Activated naive CD4-positive, alpha-beta T cell treated with anti-CD3 and anti-CD28 coated beads, Interleukin-2, amount 10 ng/mL, durations not matched to agents 7 days and 5 days (primary cell): ENCODE measurements at regions of chr12 and their contacts with region 1.

Region 1: DNA sequence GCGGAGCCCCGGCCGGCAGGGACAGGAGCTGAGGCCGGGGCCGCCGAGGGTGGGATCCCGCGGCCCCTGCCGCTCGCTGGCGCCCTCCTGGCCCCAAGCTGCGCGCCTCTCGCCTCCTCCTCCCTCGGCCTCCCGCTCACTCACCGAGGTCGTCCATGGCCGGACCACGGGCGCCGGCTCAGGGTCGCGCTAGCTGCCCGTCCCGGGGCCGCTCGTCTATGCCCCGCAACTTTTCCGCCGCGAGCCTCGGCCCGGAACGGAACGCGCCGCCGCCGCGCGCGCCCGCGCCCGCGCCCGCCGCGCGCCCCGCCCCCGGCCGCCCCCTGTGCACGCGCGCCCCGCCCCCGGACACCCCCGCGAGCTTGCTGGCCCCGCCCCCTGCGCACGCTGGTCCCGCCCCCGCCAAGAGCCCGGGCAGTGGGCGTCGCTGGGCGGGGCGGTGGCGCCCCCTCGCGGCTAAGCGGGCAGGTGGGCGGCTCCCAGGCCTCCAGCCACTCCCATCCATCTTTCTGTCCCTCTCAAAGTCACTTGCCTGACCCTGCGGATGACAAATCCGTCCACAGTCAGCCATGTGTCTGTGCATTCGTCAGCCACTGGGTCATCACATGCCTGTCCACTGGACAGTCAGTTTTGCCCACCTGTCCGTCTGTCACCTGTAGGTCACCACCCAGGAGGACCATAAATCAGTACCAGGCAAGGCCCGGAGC is at the start of gene PXN:
- DNase-seq: peak; percentile 90
- H3K4me3 Mint-ChIP-seq: peak within 1 kb of the TSS; percentile 99
- H3K27ac Mint-ChIP-seq: peak within 1 kb of the TSS; percentile 86
- H3K4me1 Mint-ChIP-seq: peaks cover 41% of the 10 kb centered on the region
- H3K27me3 Mint-ChIP-seq: peaks cover 5% of the 10 kb centered on the region

Region 2: DNA sequence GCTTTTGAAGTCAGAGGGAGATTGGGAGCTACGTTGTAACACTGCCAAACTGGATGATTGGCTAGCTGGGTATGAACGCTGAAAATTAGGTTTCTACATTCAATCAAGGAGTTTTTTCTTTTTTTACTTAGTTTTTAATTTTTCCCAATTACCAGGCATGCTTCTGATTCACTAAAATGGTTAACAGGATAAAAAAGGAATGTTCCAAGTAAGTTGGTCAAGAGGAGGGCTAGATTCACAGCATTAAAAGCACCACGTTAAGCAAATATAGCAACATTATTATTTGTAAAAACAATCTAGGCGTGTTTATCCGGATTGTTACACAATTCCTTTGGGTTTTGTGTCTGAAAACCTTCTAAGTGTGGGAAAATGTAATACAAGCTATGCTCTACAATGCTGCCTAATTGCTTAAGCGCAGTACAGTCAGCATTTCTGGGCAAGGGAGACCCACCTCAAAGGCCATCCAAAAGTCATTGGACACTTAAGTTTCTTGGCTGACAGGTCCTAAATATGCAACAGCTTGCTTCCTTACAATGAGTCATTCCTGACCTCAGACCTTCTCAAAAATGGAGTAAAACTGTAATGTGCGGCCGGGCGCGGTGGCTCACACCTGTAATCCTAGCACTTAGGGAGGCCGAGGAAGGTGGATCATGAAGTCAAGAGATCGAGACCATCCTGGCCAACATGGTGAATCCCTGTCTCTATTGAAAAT is 65.9 kb before region 1 on chr12:
- CTCF ChIA-PET with region 1: interaction called, 31 read pairs
- DNase-seq: no peak
- H3K4me3 Mint-ChIP-seq: peak overlapping the region; percentile 93
- H3K27ac Mint-ChIP-seq: peak overlapping the region; percentile 99
- H3K4me1 Mint-ChIP-seq: peaks cover 55% of the 10 kb centered on the region
- H3K27me3 Mint-ChIP-seq: no peaks in the 10 kb centered on the region

Region 3: DNA sequence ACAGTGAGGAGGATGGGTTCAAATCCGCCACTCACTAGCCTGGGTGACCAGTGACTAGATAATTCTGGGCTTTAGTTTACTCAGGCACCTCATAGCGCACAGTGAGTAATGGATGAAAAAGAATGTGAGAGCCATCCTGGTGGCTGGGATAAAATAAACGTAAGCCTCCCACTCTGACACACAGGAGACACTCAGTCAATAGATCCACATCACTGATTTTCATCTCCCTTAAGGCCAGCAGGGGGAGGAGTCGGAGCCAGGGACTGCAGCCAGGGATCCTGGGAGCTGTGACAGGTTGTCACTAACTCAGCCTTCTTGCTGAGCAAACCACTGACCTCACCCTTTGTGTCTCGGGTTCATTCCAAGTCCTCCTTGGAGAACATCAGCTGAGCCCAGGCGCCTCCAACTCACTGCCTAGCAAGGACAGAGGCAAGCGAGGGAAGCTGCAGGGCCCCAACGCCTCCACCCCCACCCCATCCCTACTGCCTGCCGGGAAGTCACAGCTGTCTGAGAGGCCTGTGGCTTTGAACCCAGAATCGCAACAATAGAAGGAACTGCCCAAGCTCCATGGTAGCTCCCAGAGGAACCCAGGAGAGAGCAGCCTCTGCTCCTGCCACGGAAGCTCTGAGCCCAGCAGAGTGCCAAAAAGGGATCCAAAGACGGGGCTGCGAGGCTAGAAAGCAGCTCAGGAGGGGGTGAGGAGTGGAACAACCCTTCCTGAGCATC is 30.8 kb before region 1 on chr12:
- CTCF ChIA-PET with region 1: interaction called, 773 read pairs
- DNase-seq: no peak
- H3K4me3 Mint-ChIP-seq: no peak overlapping the region
- H3K27ac Mint-ChIP-seq: peak overlapping the region; percentile 29
- H3K4me1 Mint-ChIP-seq: peaks cover 91% of the 10 kb centered on the region
- H3K27me3 Mint-ChIP-seq: no peaks in the 10 kb centered on the region

Region 4: GRCh38 chr12:120249875-120250795 is 15.5 kb before region 1 on chr12:
- CTCF ChIA-PET with region 1: interaction called, 73 read pairs
- DNase-seq: peak; percentile 66
- H3K4me3 Mint-ChIP-seq: peak overlapping the region; percentile 54
- H3K27ac Mint-ChIP-seq: peak overlapping the region; percentile 92
- H3K4me1 Mint-ChIP-seq: peaks cover 82% of the 10 kb centered on the region
- H3K27me3 Mint-ChIP-seq: no peaks in the 10 kb centered on the region